ENCODE measurements at regions of chr7 and their contacts with region 1.

Region 1: GRCh38 chr7:127367679-127368078 is 24.8 kb downstream of the ZNF800 start:
- DNase-seq: no peak
- ATAC-seq: no peak
- H3K4me3 Mint-ChIP-seq: no peak overlapping the region
- H3K27ac Mint-ChIP-seq: no peak overlapping the region
- H3K4me1 Mint-ChIP-seq: peaks cover 28% of the 10 kb centered on the region
- H3K27me3 Mint-ChIP-seq: no peaks in the 10 kb centered on the region

Region 2: GRCh38 chr7:127353897-127354296 is 13.8 kb before region 1 on chr7:
- CTCF ChIA-PET with region 1: interaction called, 3 read pairs
- POLR2A ChIA-PET with region 1: no interaction called
- intact Hi-C with region 1: loop called in 1 of 2 experiments (anchors 2 kb)
- DNase-seq: no peak
- ATAC-seq: no peak
- H3K4me3 Mint-ChIP-seq: no peak overlapping the region
- H3K27ac Mint-ChIP-seq: no peak overlapping the region
- H3K4me1 Mint-ChIP-seq: peaks cover 18% of the 10 kb centered on the region
- H3K27me3 Mint-ChIP-seq: no peaks in the 10 kb centered on the region

Region 3: DNA sequence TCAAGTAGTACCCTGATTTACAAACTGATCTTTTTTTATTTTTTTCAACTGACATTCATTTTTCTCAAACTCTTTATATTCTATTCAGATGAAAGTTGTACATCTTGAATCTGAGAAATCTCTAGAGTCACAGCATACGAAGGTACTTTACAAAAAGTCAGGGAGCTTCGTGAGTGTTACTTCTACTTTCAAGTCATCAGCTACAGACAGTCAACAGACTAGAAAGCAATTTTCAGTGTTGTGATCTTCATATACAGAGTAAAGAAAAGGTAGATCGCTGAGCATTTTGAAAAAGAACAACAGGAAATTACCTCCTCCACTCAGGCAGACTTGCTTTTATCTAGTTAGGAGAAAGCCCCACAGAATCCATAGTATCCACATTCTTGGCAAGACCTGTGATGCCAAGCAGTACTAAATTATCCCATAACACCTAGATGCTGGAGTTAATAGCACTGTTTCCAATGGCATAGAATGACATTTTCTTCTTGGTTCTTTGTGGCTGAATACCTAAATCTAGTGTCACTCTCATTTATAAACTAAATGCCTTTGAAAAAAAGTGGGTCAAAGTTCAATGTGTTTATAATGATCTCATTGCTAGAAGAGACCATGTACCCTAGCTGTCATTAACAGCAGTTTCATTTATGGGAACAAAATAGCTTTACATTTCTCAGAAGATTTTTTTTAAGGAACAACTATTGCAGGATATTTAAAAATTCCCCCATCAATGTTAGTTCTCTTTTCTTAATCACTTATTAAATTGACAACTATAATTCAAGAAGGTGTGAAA is 36.8 kb after region 1 on chr7:
- CTCF ChIA-PET with region 1: no interaction called
- POLR2A ChIA-PET with region 1: no interaction called
- intact Hi-C with region 1: no loop called
- DNase-seq: no peak
- ATAC-seq: peak; percentile 87
- H3K4me3 Mint-ChIP-seq: peak overlapping the region; percentile 39
- H3K27ac Mint-ChIP-seq: peak overlapping the region; percentile 63
- H3K4me1 Mint-ChIP-seq: peaks cover 18% of the 10 kb centered on the region
- H3K27me3 Mint-ChIP-seq: peaks cover 3% of the 10 kb centered on the region

Region 4: DNA sequence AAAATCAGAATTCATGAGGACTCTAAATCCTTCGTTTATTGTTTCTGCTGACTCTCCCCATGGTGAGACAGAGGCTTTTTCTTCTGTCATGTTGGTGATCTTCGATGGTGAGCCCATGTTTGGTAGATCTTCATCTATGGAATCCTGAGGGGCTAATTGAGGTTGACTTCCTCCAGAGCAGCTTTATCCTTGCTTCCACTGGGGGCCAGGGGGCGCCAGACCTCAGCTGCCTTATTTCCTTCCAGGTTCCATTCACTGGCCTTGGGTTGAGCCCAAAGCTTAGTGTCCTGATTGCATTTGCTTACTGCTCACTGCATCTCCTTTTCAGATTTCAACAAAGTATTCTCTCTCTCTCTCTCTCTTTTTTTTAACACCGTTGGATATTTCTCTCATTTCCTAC is 137.0 kb after region 1 on chr7:
- CTCF ChIA-PET with region 1: no interaction called
- POLR2A ChIA-PET with region 1: no interaction called
- intact Hi-C with region 1: no loop called
- DNase-seq: peak; percentile 41
- ATAC-seq: no peak
- H3K4me3 Mint-ChIP-seq: no peak overlapping the region
- H3K27ac Mint-ChIP-seq: no peak overlapping the region
- H3K4me1 Mint-ChIP-seq: no peaks in the 10 kb centered on the region
- H3K27me3 Mint-ChIP-seq: peaks cover 8% of the 10 kb centered on the region

Measured in activated CD4-positive, alpha-beta T cell treated with anti-CD3 and anti-CD28 coated beads for 36 hours (primary cell).